ENCODE measurements at regions of chr21 and their contacts with region 1.

Region 1: DNA sequence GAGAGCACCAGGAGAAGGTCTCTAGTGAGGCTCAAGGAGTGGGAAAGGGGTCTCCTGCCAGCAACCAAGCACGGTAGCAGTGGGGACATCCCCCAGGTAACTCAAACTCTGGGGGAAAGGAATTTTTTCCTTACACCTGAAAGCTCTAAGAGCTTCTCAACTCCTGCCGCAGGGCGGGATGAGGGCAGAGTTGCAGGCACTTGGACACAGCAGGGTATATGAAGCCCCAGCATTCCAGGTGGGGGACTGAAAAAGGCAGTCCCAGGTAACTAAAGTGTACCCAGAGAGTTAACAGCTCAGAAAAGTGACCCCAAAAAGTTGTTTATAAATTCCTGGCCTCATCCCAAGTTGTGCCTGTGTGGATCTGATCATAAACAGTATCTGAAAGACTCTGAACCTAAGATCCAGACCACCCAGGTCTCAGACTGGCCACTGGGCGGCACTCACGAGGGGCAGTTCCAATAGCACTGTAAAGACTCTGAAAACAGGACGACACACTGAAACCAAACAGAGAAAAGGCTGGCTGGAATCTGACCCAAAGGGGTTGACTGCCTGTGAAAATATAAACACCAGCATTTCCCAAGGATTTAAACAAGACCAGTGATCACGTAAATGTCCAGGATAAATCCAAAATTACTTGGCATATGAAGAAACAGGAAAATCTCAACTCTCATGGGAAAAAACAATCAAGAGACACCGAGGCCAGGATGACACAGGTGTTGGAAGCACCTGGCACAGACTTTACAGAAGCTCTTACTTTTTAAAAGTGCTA is 47.5 kb downstream of the HSF2BP start:
- DNase-seq: peak; percentile 73
- H3K4me3 ChIP-seq: no peak overlapping the region; a peak in 1 of 4 replicates
- H3K27ac ChIP-seq: no peak overlapping the region
- H3K4me1 ChIP-seq: peaks cover 11 to 13% of the 10 kb centered on the region in 2 experiments; a peak in 2 of 4 replicates
- H3K27me3 ChIP-seq: no peaks in the 10 kb centered on the region
- CTCF ChIP-seq: peak; percentile 82
- EP300 ChIP-seq: no peak
- RAD21 ChIP-seq: peak; percentile 70

Region 2: GRCh38 chr21:43333298-43334062 is 278.3 kb before region 1 on chr21:
- CTCF ChIA-PET with region 1: no interaction called
- POLR2A ChIA-PET with region 1: no interaction called
- DNase-seq: no peak
- H3K4me3 ChIP-seq: no peak overlapping the region
- H3K27ac ChIP-seq: peak overlapping the region; percentile 21 to 29; a peak in 1 of 4 replicates
- H3K4me1 ChIP-seq: peaks cover 3 to 9% of the 10 kb centered on the region in 2 experiments; a peak in 2 of 4 replicates
- H3K27me3 ChIP-seq: no peaks in the 10 kb centered on the region
- CTCF ChIP-seq: no peak
- EP300 ChIP-seq: no peak
- RAD21 ChIP-seq: no peak

Region 3: GRCh38 chr21:43600642-43601402 is 11.0 kb before region 1 on chr21:
- CTCF ChIA-PET with region 1: interaction called, 17 read pairs
- POLR2A ChIA-PET with region 1: no interaction called
- DNase-seq: peak; percentile 39
- H3K4me3 ChIP-seq: no peak overlapping the region
- H3K27ac ChIP-seq: peak overlapping the region; percentile 72 to 89
- H3K4me1 ChIP-seq: peaks cover 23 to 31% of the 10 kb centered on the region in 2 experiments; a peak in 3 of 4 replicates
- H3K27me3 ChIP-seq: no peaks in the 10 kb centered on the region
- CTCF ChIP-seq: no peak
- EP300 ChIP-seq: peak; percentile 20 to 81; a peak in 2 of 4 replicates
- RAD21 ChIP-seq: no peak

Region 4: GRCh38 chr21:43624339-43624738 is 12.6 kb after region 1 on chr21:
- CTCF ChIA-PET with region 1: interaction called, 12 read pairs
- POLR2A ChIA-PET with region 1: no interaction called
- DNase-seq: no peak
- H3K4me3 ChIP-seq: no peak overlapping the region
- H3K27ac ChIP-seq: no peak overlapping the region
- H3K4me1 ChIP-seq: peaks cover 0 to 6% of the 10 kb centered on the region in 2 experiments; a peak in 1 of 4 replicates
- H3K27me3 ChIP-seq: no peaks in the 10 kb centered on the region
- CTCF ChIP-seq: no peak
- EP300 ChIP-seq: no peak
- RAD21 ChIP-seq: 0 out of 2 replicates have a peak, but pooled peaks have one; percentile 4

Region 5: GRCh38 chr21:43646550-43647260 is 34.9 kb after region 1 on chr21:
- CTCF ChIA-PET with region 1: interaction called, 30 read pairs
- POLR2A ChIA-PET with region 1: no interaction called
- DNase-seq: peak; percentile 89
- H3K4me3 ChIP-seq: peak overlapping the region in 1 of 2 experiments; percentile 22; a peak in 1 of 4 replicates
- H3K27ac ChIP-seq: peak overlapping the region in 1 of 2 experiments; percentile 69; a peak in 2 of 4 replicates
- H3K4me1 ChIP-seq: peaks cover 2 to 12% of the 10 kb centered on the region in 2 experiments; a peak in 3 of 4 replicates
- H3K27me3 ChIP-seq: no peaks in the 10 kb centered on the region
- CTCF ChIP-seq: peak; percentile 99
- EP300 ChIP-seq: no peak
- RAD21 ChIP-seq: peak; percentile 100

Measured in SK-N-SH (cell line).